IMR-90 (cell line): ENCODE measurements at regions of chr10 and their contacts with region 1.

Region 1: GRCh38 chr10:100934084-100934659 is 21.4 kb downstream of the SLF2 start:
- DNase-seq: no peak
- ATAC-seq: no peak
- H3K4me3 ChIP-seq: no peak overlapping the region
- H3K27ac ChIP-seq: no peak overlapping the region
- H3K4me1 ChIP-seq: peaks cover 3% of the 10 kb centered on the region
- H3K27me3 ChIP-seq: no peaks in the 10 kb centered on the region
- CTCF ChIP-seq: peak; percentile 37
- POLR2A ChIP-seq: no peak
- RAD21 ChIP-seq: 0 out of 2 replicates have a peak, but pooled peaks have one; percentile 11

Region 2: GRCh38 chr10:100912605-100913469 is 21.3 kb before region 1 on chr10 and contains the start of gene SLF2:
- CTCF ChIA-PET with region 1: interaction called, 4 read pairs
- POLR2A ChIA-PET with region 1: no interaction called
- dilution Hi-C with region 1: no loop called
- in situ Hi-C with region 1: no loop called
- intact Hi-C with region 1: loop called (anchors 2 kb)
- DNase-seq: peak; percentile 98
- ATAC-seq: peak; percentile 93
- H3K4me3 ChIP-seq: peak within 1 kb of the TSS; percentile 87
- H3K27ac ChIP-seq: peak within 1 kb of the TSS; percentile 99
- H3K4me1 ChIP-seq: peaks cover 4% of the 10 kb centered on the region
- H3K27me3 ChIP-seq: no peaks in the 10 kb centered on the region
- CTCF ChIP-seq: no peak
- POLR2A ChIP-seq: peak; percentile 70; the same call in 1 of the 2 replicates
- RAD21 ChIP-seq: no peak
- total RNA-seq, gene SLF2: 21.7 and 28.1 TPM in 2 replicates

Region 3: DNA sequence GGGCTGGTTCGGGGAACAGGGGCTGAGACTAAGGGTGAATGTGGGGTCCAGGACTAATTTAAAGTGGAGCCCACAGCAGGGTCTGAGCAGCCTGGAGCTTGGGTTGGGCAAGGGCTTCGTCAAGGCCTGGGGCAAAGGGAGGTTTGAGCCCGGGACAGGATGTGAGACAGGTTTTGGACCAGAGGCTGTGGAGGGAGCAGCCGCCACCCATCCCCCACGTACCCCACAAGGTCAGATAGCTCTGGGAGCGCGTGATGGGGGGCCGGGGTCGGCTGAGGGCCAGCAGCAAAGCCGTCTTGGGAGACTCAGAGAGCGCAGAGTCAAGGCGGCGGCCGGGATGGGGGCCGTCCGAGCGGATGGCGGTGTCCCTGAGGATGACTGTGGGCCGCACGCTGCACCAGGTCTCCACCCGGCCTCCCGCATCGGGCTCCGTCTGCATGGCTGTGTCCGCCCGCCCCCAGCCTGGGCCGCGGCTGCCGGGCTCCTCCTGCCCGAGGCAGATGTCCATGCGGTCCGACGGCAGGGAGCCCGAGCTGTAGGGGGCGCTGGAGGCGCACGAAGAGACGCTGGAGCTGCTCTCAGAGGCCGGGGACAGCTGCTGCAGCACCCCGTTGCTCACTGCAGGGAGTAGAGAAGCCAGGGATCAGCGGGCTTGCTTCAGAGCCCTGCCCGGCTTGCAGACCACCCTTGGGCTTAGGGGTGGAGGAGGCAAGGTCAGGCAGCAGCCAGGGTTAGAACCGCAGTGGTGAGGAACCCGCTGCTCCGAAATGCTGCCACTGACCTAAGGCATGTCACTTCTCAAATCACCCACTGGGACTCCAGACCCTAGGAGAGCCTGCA is 84.6 kb after region 1 on chr10:
- CTCF ChIA-PET with region 1: no interaction called
- POLR2A ChIA-PET with region 1: no interaction called
- dilution Hi-C with region 1: no loop called
- in situ Hi-C with region 1: no loop called
- intact Hi-C with region 1: no loop called
- DNase-seq: peak; percentile 77
- ATAC-seq: peak; percentile 90
- H3K4me3 ChIP-seq: no peak overlapping the region
- H3K27ac ChIP-seq: no peak overlapping the region
- H3K4me1 ChIP-seq: peaks cover 10% of the 10 kb centered on the region
- H3K27me3 ChIP-seq: peaks cover 1% of the 10 kb centered on the region; the same call in 1 of the 2 replicates
- CTCF ChIP-seq: peak; percentile 89
- POLR2A ChIP-seq: no peak
- RAD21 ChIP-seq: peak; percentile 79

Region 4: DNA sequence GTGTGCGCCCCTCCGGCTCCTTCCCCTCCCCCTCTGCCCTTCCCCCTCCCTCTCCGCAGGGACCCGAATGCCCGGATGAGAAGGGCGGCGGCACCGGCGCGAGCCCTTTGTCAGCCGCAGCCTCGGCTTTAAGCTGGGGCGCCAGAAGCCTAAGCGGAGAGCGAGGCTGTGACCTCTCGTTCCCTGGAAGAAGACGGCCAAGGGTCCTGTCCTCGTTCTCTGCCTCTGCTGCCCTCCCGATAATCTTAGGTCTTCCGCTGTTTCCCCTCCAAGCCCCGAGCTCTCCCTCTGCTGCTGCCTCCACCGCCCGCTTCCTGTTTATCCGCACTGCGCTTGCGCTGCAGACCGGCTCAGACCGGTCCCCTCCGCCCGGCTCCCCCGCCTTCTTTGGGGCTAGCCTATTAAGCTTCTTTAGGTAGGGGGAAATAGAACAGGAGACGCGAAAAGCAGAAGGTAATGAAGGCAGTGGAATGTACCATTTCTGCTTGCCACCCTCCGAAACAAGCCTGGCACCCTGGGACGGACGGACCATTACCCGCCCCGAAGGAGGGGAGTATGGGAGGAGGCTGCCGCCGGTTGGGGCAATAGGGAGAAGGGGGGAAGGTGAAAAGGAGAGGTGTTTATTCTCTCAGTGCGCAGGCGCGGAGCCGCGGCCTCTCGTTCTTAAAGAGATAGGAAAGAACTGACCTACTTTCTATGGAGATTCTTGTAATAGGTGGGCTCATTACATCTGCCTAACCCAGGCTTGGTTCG is 884.1 kb after region 1 on chr10 and contains the start of gene OGA:
- CTCF ChIA-PET with region 1: no interaction called
- POLR2A ChIA-PET with region 1: no interaction called
- dilution Hi-C with region 1: no loop called
- in situ Hi-C with region 1: loop called (anchors 25 kb)
- intact Hi-C with region 1: no loop called
- DNase-seq: peak; percentile 100
- ATAC-seq: peak; percentile 92
- H3K4me3 ChIP-seq: peak within 1 kb of the TSS; percentile 70
- H3K27ac ChIP-seq: peak within 1 kb of the TSS; percentile 90
- H3K4me1 ChIP-seq: peaks cover 6% of the 10 kb centered on the region
- H3K27me3 ChIP-seq: no peaks in the 10 kb centered on the region
- CTCF ChIP-seq: no peak
- POLR2A ChIP-seq: peak; percentile 93
- RAD21 ChIP-seq: no peak
- total RNA-seq, gene OGA: 62.9 and 89.7 TPM in 2 replicates